ENCODE measurements at regions of chr1 and their contacts with region 1.

Region 1: GRCh38 chr1:61077676-61078541 is 4.5 kb upstream of the NFIA start:
- DNase-seq: peak; percentile 100
- H3K27ac ChIP-seq: peak overlapping the region; percentile 93
- CTCF ChIP-seq: no peak

Region 2: GRCh38 chr1:60950224-60951063 is 127.5 kb before region 1 on chr1:
- CTCF ChIA-PET with region 1: no interaction called
- POLR2A ChIA-PET with region 1: no interaction called
- DNase-seq: no peak
- H3K27ac ChIP-seq: no peak overlapping the region
- CTCF ChIP-seq: no peak

Region 3: DNA sequence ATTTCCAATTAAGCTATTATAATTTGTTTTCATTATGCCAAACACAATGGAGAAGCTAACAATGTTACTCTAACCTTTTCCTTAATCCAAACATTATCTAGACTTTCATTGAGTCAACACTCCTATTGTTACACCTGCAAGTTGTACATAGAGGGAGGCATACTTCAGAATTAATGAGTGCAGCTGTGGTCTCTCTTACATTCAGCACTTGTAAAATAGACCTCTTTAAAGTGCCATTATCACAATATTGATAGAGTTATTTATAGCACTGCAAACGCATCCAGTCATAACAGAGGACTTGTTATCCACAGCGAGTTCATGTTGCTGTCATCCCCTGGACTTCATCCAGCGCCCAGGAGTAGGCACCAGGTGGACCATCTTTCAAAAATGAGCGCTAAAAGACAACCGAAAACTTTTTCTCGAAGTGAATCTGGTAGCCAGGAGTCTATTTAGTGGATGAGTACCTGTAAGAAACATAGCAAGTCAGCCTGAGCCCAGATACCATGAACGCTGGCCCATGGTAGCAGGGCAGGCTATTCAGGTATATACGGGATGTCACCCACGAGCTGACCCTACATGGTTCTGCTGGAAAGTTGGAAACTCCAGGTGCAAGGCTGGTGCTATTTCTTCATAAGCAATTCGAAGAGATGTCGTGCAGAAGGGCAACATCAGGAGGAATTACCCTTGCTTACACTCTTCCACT is 66.2 kb before region 1 on chr1:
- CTCF ChIA-PET with region 1: no interaction called
- POLR2A ChIA-PET with region 1: no interaction called
- DNase-seq: no peak
- H3K27ac ChIP-seq: no peak overlapping the region
- CTCF ChIP-seq: no peak

Region 4: DNA sequence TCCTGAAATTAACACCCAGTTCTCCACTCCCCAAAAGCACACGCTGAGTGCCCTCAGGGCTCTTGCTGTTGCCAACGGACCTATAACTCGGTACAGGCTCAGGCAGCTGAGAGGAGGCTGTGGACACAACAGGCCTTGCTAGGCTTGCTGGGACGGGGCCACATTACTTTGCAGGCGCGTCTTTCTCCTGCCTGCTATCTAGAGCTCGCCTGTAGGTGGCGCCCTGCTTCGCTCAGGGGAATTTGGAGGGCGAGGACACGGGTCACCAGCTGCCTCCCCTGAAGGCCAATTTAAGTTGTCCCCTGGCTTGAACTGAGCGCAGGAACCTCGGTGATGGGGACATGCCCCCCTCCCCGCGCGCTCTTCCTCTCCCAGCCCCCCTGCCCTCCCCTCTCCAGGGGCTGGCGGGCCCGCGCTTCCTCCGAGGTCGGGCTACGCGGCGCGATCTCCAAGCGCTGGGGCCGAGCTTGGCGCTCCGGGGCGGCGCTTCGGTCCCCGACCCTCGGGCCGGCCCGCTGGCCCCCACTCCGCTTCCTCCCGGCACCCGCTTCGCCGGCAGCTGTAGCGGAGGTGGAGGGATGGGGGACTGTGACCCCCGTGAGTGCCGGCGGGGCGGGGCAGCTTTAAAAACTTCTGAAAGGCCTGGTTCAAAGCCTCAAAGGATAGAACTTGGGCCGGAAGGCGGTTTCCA is 27.9 kb before region 1 on chr1:
- CTCF ChIA-PET with region 1: interaction called, 23 read pairs
- POLR2A ChIA-PET with region 1: interaction called, 6 read pairs
- DNase-seq: peak; percentile 75
- H3K27ac ChIP-seq: peak overlapping the region; percentile 86
- CTCF ChIP-seq: peak; percentile 92

Region 5: GRCh38 chr1:61058483-61059245 is 19.2 kb before region 1 on chr1:
- CTCF ChIA-PET with region 1: interaction called, 11 read pairs
- POLR2A ChIA-PET with region 1: no interaction called
- DNase-seq: peak; percentile 56
- H3K27ac ChIP-seq: no peak overlapping the region
- CTCF ChIP-seq: no peak

Region 6: GRCh38 chr1:61221642-61222041 is 143.7 kb after region 1 on chr1:
- CTCF ChIA-PET with region 1: no interaction called
- POLR2A ChIA-PET with region 1: no interaction called
- DNase-seq: no peak
- H3K27ac ChIP-seq: no peak overlapping the region
- CTCF ChIP-seq: no peak

Region 7: DNA sequence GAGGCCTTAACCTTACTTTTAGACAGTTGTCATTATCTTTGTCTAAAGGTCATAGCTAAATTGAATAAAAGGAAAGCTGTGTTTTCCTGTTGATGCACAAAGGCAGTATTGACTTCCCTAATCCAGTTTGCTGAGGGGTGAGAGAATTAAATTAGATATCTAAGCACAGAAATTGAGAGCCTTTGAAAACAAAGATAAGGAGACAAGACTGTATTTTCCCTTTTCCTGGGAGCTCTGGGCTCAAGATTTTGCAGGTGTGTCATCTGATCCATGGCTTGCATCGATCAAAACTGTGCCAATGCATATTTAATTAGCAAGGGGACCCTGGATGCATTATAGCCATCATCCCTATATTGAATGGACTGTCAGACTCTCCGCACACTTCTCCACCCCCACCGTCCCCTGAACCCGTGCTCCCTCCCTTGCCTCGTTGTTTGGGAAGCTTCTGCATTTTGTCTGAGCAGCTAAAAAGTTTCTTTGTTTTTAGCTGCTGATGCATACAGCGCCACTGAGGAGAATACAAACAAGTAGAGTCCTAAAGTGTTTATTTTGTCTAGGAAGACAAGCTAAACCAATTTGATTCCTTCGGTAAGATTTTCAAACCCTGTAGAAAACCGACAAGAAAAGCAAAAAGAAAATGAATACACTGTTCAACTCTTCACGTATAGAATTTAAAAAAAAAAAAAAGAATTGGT is 190.8 kb after region 1 on chr1:
- CTCF ChIA-PET with region 1: no interaction called
- POLR2A ChIA-PET with region 1: no interaction called
- DNase-seq: no peak
- H3K27ac ChIP-seq: no peak overlapping the region
- CTCF ChIP-seq: no peak

Measured in RWPE1 (cell line).